ENCODE measurements at regions of chr9 and their contacts with region 1.

Region 1: DNA sequence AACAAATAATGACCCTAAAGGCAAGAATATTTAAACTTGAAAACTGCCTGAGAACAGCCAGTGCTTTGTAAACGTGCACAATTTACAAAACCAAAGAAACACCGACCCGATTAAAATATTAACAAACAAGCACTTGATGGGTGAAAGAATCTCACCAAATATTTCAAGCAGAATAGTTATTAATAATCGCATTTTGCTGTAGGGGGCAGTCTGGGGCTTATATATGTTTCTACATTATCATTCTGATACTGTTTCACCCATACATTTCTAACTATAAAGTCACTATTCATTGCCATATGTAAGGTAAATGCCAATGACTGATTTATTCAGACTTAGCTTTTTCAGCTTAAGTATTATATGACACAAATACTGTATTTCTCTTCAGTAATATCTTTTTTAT is 37.7 kb downstream of the UBAP2 start:
- DNase-seq: no peak
- ATAC-seq: no peak

Region 2: DNA sequence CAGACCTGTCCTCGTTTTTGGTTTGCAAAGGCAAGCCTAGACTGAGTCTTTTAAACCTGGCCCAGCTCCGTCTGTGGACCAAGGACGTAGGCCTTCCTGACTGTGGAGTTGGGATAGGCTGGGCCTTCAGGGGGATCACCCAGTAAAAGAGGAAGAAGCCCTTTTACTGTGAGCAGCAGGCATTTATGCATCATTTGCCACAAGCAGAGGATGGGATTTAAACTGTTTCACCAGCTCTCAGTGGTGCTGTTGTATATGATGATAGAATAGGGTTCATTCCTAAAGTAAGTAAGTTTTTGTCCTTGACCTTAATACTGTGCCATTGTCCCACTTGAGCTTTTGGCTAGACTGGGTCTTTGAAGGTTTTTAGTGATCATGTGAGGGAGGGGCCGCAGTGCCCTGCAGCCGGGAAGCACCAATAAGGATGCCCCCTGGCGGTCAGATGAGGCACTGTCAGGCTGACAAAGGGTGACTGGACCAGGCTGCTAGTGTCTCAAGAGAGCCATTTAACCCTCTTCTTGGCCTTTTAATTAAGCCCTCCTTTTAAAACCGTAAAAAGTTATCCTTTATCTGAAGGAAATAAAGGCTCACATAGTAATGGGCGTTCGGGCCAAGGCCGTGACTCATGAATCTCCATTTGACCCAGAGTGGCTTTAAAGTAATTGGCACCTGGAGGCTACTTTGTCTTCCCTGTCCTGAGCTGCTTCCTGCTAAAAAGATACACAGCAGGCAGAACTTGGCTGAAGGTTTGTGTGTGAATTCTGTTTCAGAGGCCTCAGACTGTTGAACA is 241.9 kb after region 1 on chr9:
- intact Hi-C with region 1: loop called (anchors 10 kb)
- DNase-seq: peak; percentile 76
- ATAC-seq: peak; percentile 58